Natural killer cell (primary cell): ENCODE measurements at regions of chr4 and their contacts with region 1.

Region 1: DNA sequence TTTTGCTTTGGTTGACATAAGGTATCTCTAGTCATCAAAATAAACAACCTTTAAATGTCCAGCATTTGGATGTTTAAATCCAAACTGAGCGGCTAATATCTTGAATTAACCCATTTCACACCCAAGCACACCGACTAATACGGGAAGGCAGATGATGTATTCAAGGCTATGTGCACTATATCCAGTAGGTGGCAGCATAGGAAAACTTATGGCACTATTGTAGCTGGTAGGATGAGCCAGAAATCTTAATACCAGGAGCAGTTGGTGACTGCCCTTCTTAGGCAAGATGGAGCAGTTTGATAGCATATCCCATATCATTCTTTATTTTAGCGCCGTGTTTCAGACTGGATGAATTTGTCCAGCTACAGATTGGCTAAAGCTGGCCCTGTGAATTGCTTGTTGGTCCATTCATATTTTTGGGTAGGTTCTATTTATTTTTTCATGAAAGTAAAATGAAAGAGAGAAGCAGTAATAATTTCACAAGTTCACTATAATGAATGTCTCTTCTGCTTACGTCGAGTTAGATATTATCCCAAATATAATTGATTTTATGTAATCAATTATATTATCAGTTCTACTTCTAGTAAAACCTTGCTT is 24.4 kb downstream of the UCHL1 start:
- DNase-seq: peak in 1 of 2 donors; percentile 71
- ATAC-seq: peak; percentile 49 to 87 (median 72)
- H3K4me3 ChIP-seq: no peak overlapping the region
- H3K4me3 Mint-ChIP-seq: no peak overlapping the region
- H3K27ac ChIP-seq: no peak overlapping the region
- H3K27ac Mint-ChIP-seq: no peak overlapping the region
- H3K4me1 ChIP-seq: no peaks in the 10 kb centered on the region
- H3K4me1 Mint-ChIP-seq: no peaks in the 10 kb centered on the region
- H3K27me3 ChIP-seq: no peaks in the 10 kb centered on the region
- H3K27me3 Mint-ChIP-seq: peaks cover 4 to 5% of the 10 kb centered on the region in 2 donors
- CTCF ChIP-seq: peak; percentile 71

Region 2: GRCh38 chr4:40629401-40630334 is 651.5 kb before region 1 on chr4 and contains the start of gene RBM47:
- intact Hi-C with region 1: no loop called
- DNase-seq: peak in 1 of 2 donors; percentile 46
- ATAC-seq: peak in 1 of 3 donors; percentile 46
- H3K4me3 ChIP-seq: peak within 1 kb of the TSS; percentile 44
- H3K4me3 Mint-ChIP-seq: peak within 1 kb of the TSS; percentile 63
- H3K27ac ChIP-seq: peak within 1 kb of the TSS; percentile 49
- H3K27ac Mint-ChIP-seq: no peak within 1 kb of the TSS
- H3K4me1 ChIP-seq: peaks cover 9% of the 10 kb centered on the region
- H3K4me1 Mint-ChIP-seq: peaks cover 8 to 14% of the 10 kb centered on the region in 2 donors
- H3K27me3 ChIP-seq: peaks cover 5% of the 10 kb centered on the region
- H3K27me3 Mint-ChIP-seq: peaks cover 41 to 58% of the 10 kb centered on the region in 2 donors
- CTCF ChIP-seq: no peak
- total RNA-seq, gene RBM47: 2.0 to 7.7 (median 3.9) TPM

Region 3: GRCh38 chr4:40887288-40888131 is 393.6 kb before region 1 on chr4:
- intact Hi-C with region 1: no loop called
- DNase-seq: no peak
- ATAC-seq: no peak
- H3K4me3 ChIP-seq: no peak overlapping the region
- H3K4me3 Mint-ChIP-seq: no peak overlapping the region
- H3K27ac ChIP-seq: no peak overlapping the region
- H3K27ac Mint-ChIP-seq: no peak overlapping the region
- H3K4me1 ChIP-seq: no peaks in the 10 kb centered on the region
- H3K4me1 Mint-ChIP-seq: no peaks in the 10 kb centered on the region
- H3K27me3 ChIP-seq: no peaks in the 10 kb centered on the region
- H3K27me3 Mint-ChIP-seq: peaks cover 3 to 10% of the 10 kb centered on the region in 2 donors
- CTCF ChIP-seq: no peak

Region 4: DNA sequence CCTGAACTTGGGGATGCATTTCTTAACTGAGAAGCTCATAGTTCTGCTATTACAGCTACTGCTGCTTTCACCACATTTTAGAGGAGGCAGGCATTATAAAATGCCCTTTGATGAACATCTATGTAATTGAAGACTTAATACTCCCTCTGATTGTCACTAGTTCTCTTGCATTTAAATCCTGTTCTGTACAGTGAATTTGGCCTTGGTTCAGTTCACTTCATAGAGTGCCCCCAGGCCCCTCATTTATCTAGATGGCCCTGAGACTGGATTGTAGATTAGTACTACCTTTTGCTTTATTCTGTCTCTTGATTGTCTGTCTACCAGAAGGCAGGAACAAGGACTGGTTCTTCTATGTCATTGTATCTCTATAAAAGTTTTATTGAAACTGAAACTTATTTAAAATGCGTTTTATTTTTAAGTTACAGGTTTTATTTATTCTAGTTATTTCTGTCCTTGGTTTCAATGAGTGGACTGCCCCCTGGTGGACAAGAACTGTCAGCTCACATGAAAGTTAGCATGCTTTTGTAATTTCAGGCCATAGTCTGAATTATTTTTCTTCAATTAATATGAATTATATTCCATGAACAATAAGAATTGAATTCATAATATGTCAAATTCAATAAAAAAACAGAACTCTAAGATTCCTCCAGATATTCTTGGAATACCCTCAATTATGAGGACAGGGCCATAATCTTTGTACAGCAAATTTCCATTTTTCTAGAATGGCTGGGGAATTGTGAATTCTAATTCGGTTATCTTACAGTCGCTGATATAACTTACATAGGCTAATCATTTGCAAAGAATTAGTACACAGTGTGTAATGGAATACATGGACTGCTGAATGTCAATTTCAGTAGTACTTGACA is 606.9 kb after region 1 on chr4:
- intact Hi-C with region 1: loop called (anchors 1 kb)
- DNase-seq: peak in 1 of 2 donors; percentile 71
- ATAC-seq: no peak
- H3K4me3 ChIP-seq: no peak overlapping the region
- H3K4me3 Mint-ChIP-seq: no peak overlapping the region
- H3K27ac ChIP-seq: no peak overlapping the region
- H3K27ac Mint-ChIP-seq: no peak overlapping the region
- H3K4me1 ChIP-seq: no peaks in the 10 kb centered on the region
- H3K4me1 Mint-ChIP-seq: no peaks in the 10 kb centered on the region
- H3K27me3 ChIP-seq: no peaks in the 10 kb centered on the region
- H3K27me3 Mint-ChIP-seq: peaks cover 24 to 43% of the 10 kb centered on the region in 2 donors
- CTCF ChIP-seq: peak; percentile 86